Calu3 (cell line): ENCODE measurements at regions of chr5 and their contacts with region 1.

Region 1: DNA sequence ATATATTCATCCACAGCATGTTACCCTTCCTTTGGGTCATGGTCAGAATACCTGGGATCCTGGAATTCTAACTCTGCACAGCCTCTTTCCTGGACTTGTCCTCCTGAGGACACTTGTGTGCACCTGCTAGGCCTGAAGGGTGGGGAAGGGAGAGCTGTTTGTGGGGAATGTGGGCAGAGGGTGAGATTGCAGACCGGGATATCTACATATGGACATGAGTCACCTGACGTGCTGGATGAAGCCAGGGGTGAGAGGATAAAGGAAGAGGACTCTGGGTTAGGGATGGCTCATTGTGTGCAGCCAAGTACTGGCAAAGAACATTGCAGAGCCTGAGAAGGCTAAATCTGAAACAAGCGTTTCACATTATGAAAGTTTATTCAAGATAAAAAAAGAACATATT is 241.4 kb upstream of the RPS23 start:
- DNase-seq: no peak
- H3K4me3 Mint-ChIP-seq: no peak overlapping the region
- H3K27ac Mint-ChIP-seq: no peak overlapping the region
- H3K4me1 Mint-ChIP-seq: no peaks in the 10 kb centered on the region
- H3K27me3 Mint-ChIP-seq: no peaks in the 10 kb centered on the region
- CTCF ChIP-seq: no peak

Region 2: DNA sequence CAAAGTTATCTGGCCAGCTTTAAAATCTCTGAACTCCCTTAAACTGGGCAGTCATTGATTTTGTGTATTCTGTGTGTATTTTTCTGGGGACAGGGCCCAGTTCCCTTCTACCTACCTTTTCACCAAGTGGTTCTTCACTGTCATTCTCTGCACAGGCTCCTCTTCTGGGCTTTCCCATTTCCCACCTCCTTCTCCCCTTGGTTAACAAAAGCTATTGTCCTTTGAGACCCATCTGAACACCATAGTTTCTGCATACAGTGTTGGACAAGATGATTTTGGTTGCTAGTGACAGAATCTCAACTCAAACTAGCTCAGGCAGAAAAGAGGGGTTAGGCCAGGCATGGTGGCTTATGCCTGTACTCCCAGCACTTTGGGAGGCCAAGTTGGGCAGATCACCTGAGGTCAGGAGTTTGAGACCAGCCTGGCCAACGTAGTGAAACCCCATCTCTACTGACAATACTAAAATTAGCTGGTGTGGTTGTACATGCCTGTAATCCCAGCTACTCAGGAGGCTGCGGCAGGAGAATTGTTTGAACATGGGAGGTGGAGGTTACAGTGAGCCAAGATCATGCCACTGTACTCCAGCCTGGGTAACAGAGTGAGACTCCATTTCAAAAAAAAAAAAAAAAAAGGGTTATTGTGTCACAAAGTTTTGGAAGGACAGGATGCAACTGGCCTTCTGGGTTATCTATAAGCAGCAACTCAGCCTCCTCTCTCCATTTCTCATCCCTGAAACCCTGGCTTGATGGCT is 1918.4 kb before region 1 on chr5:
- CTCF ChIA-PET with region 1: interaction called, 10 read pairs
- intact Hi-C with region 1: no loop called
- DNase-seq: no peak
- H3K4me3 Mint-ChIP-seq: no peak overlapping the region
- H3K27ac Mint-ChIP-seq: no peak overlapping the region
- H3K4me1 Mint-ChIP-seq: no peaks in the 10 kb centered on the region
- H3K27me3 Mint-ChIP-seq: no peaks in the 10 kb centered on the region
- CTCF ChIP-seq: no peak